ENCODE measurements at regions of chr11 and their contacts with region 1.

Region 1: DNA sequence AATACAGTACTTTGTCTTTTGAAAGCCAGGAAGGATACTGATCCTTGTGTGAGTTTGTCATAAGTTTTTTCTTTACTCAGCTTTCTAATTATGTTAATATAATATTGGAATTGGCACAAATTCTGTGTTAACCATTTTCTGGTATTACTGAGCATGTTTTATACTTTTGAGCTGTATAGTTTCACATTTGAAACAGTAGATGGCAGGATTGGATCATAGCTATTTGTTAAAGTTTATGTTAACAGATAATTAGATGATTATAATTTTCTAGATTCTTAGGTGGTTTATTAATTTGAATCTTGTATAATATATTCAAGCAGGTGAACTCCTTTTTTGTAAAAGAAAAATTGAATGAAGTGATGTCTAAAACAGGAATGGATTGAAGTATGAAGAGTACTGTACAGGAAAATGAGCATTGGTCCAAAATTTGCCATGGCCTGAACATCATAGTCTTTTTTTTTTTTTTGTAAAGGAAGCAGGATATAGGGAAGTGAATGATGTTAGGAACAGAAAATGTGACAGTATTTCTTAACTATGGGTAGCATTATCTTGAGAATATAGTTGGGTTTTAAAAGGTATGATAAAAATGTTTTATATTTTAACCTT is 102.0 kb downstream of the CYP2R1 start:
- DNase-seq: no peak
- ATAC-seq: no peak
- H3K4me3 ChIP-seq: no peak overlapping the region
- H3K27ac ChIP-seq: no peak overlapping the region
- H3K4me1 ChIP-seq: no peaks in the 10 kb centered on the region
- H3K27me3 ChIP-seq: no peaks in the 10 kb centered on the region
- CTCF ChIP-seq: peak in 2 of 3 experiments; percentile 21 to 27; a peak in 3 of 6 replicates
- EP300 ChIP-seq: no peak
- POLR2A ChIP-seq: no peak
- RAD21 ChIP-seq: peak; percentile 46

Region 2: GRCh38 chr11:15006139-15006759 is 216.3 kb after region 1 on chr11:
- CTCF ChIA-PET with region 1: interaction called, 6 read pairs
- POLR2A ChIA-PET with region 1: no interaction called
- RAD21 ChIA-PET with region 1: no interaction called
- SMC1A ChIA-PET with region 1: interaction called, 3 read pairs
- in situ Hi-C with region 1: no loop called
- intact Hi-C with region 1: loop called (anchors 1 kb)
- DNase-seq: peak; percentile 0
- ATAC-seq: peak; percentile 86
- H3K4me3 ChIP-seq: no peak overlapping the region
- H3K27ac ChIP-seq: no peak overlapping the region
- H3K4me1 ChIP-seq: no peaks in the 10 kb centered on the region
- H3K27me3 ChIP-seq: no peaks in the 10 kb centered on the region; a peak in 1 of 4 replicates
- CTCF ChIP-seq: peak; percentile 33 to 53 (median 50); a peak in 5 of 6 replicates
- EP300 ChIP-seq: no peak
- POLR2A ChIP-seq: no peak
- RAD21 ChIP-seq: peak; percentile 49

Region 3: GRCh38 chr11:15074206-15075161 is 284.5 kb after region 1 on chr11:
- CTCF ChIA-PET with region 1: interaction called, 5 read pairs
- POLR2A ChIA-PET with region 1: no interaction called
- RAD21 ChIA-PET with region 1: no interaction called
- SMC1A ChIA-PET with region 1: interaction called, 3 read pairs
- in situ Hi-C with region 1: no loop called
- intact Hi-C with region 1: loop called (anchors 5 kb)
- DNase-seq: no peak
- ATAC-seq: peak; percentile 99
- H3K4me3 ChIP-seq: no peak overlapping the region
- H3K27ac ChIP-seq: no peak overlapping the region
- H3K4me1 ChIP-seq: no peaks in the 10 kb centered on the region
- H3K27me3 ChIP-seq: 0 out of 4 replicates have a peak, but pooled peaks cover 0 to 2% of the 10 kb centered on the region in 2 experiments
- CTCF ChIP-seq: peak; percentile 67 to 88 (median 75)
- EP300 ChIP-seq: no peak
- POLR2A ChIP-seq: no peak
- RAD21 ChIP-seq: peak; percentile 65

Region 4: DNA sequence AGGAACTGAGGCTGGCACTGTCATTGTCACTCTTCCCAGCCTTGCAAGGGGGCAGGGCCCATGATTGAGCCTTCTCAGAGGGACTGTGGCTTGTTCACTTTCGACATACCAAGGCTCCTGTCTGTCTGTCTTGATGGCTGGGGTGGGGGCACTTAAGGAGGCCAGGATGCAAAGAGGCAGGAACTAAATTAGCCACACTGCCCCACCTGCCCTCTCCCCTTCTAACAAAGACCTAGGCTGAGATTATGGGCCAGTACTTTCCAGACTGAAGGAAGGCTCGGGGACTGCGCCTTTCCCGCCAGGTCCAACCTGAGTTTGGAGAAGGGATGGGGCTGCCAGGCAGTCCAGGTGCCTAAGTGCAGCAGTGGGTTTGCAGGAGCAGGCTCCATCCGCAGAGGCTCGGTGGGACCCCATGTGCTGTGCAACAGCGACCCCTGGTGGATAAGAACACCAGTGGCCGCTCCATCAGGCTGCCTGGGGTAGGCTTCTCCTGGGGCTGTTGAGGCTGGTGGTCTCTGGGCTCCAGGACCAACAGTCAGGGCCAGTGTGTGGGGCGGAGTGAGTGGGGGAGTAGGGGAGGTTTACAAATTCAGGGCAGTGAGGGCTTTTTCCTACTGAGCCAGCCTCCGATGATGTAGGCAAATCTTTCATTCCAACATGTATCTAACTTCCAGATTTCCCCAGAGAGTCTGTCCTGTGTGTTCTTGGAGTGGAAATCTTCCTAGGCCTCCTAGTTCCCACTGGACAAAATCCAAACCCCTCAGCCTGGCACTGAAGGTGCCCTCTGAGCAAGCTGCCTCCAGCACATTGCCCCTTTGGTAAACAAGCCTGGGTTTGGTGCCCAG is 418.6 kb after region 1 on chr11:
- CTCF ChIA-PET with region 1: interaction called, 3 read pairs
- POLR2A ChIA-PET with region 1: no interaction called
- RAD21 ChIA-PET with region 1: interaction called, 4 read pairs
- SMC1A ChIA-PET with region 1: no interaction called
- in situ Hi-C with region 1: no loop called
- intact Hi-C with region 1: loop called (anchors 1 kb)
- DNase-seq: no peak
- ATAC-seq: peak; percentile 100
- H3K4me3 ChIP-seq: no peak overlapping the region
- H3K27ac ChIP-seq: no peak overlapping the region
- H3K4me1 ChIP-seq: no peaks in the 10 kb centered on the region
- H3K27me3 ChIP-seq: no peaks in the 10 kb centered on the region
- CTCF ChIP-seq: peak; percentile 84 to 97 (median 92)
- EP300 ChIP-seq: no peak
- POLR2A ChIP-seq: no peak
- RAD21 ChIP-seq: peak; percentile 92